Dorsolateral prefrontal cortex (tissue), 120 donors: ENCODE measurements at regions of chr15 and their contacts with region 1.

Region 1: DNA sequence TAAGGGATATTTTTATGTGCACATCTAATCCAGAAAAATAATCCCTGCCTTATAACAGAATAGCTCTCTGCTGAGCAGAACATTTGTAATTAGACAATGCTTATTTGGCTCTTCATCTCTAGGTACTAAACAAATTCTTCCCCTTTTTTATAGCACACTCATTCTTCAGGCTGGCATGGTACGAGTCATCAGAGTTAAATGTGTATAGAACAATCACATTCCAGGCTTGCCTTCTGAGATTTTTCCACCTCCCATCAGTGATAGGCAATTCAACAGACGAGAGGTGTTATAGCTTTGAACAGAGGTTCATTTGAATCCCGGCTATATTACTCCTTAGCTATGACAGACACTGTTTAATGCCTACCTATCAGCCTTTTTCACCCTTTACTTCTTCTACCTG is 21.4 kb upstream of the SPPL2A start:
- DNase-seq: no peak
- H3K4me3 ChIP-seq: no peak overlapping the region
- H3K27ac ChIP-seq: peak overlapping the region in 2 of 59 donors; percentile 4 to 28
- H3K27me3 ChIP-seq: no peaks in the 10 kb centered on the region
- CTCF ChIP-seq: no peak

Region 2: GRCh38 chr15:50840520-50840919 is 53.6 kb after region 1 on chr15:
- intact Hi-C with region 1: loop called in 1 of 2 experiments (anchors 2 kb)
- DNase-seq: no peak
- H3K4me3 ChIP-seq: no peak overlapping the region
- H3K27ac ChIP-seq: no peak overlapping the region
- H3K27me3 ChIP-seq: no peaks in the 10 kb centered on the region
- CTCF ChIP-seq: no peak

Region 3: DNA sequence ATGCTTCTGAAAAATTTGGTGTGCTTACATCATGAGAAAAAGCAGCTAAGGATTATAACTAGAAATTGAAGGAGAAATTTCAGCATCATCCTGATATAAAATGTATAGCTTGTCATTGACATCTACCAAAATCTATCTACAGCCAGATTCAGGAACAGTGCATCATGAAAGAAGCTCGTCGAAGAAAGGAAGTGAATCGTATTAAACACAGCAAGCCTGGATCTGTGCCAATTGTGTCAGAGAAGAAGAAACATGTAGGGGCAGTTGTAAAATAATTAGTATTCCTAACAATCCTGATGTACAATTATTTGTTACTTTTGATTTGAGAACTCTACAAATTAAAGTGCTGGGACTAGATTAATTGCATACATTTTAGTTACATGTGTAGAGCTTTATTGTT is 158.9 kb after region 1 on chr15:
- intact Hi-C with region 1: no loop called
- DNase-seq: no peak
- H3K4me3 ChIP-seq: no peak overlapping the region
- H3K27ac ChIP-seq: no peak overlapping the region
- H3K27me3 ChIP-seq: no peaks in the 10 kb centered on the region
- CTCF ChIP-seq: no peak